CD8-positive, alpha-beta T cell (primary cell): ENCODE measurements at regions of chr12 and their contacts with region 1.

Region 1: GRCh38 chr12:12716793-12717585 is at the start of gene CDKN1B:
- DNase-seq: peak; percentile 76 to 93 (median 86)
- ATAC-seq: peak; percentile 62
- H3K4me3 ChIP-seq: peak within 1 kb of the TSS; percentile 95 to 96
- H3K4me3 Mint-ChIP-seq: peak within 1 kb of the TSS; percentile 98
- H3K27ac ChIP-seq: peak within 1 kb of the TSS; percentile 93 to 97
- H3K27ac Mint-ChIP-seq: peak within 1 kb of the TSS; percentile 98
- H3K4me1 ChIP-seq: peaks cover 47% of the 10 kb centered on the region
- H3K4me1 Mint-ChIP-seq: peaks cover 66% of the 10 kb centered on the region
- H3K27me3 ChIP-seq: no peaks in the 10 kb centered on the region
- H3K27me3 Mint-ChIP-seq: no peaks in the 10 kb centered on the region
- CTCF ChIP-seq: no peak
- total RNA-seq, gene CDKN1B: 240 to 245 TPM

Region 2: GRCh38 chr12:10721651-10722501 is 1995.1 kb before region 1 on chr12:
- CTCF ChIA-PET with region 1: no interaction called
- POLR2A ChIA-PET with region 1: no interaction called
- intact Hi-C with region 1: loop called in 1 of 2 experiments (anchors 10 kb)
- DNase-seq: peak; percentile 26 to 96 (median 63)
- ATAC-seq: peak; percentile 75
- H3K4me3 ChIP-seq: peak overlapping the region; percentile 69 to 72
- H3K4me3 Mint-ChIP-seq: peak overlapping the region; percentile 91
- H3K27ac ChIP-seq: peak overlapping the region; percentile 86 to 94
- H3K27ac Mint-ChIP-seq: peak overlapping the region; percentile 93
- H3K4me1 ChIP-seq: peaks cover 25% of the 10 kb centered on the region
- H3K4me1 Mint-ChIP-seq: peaks cover 50% of the 10 kb centered on the region
- H3K27me3 ChIP-seq: peaks cover 0 to 6% of the 10 kb centered on the region in 2 experiments
- H3K27me3 Mint-ChIP-seq: peaks cover 15% of the 10 kb centered on the region
- CTCF ChIP-seq: no peak

Region 3: DNA sequence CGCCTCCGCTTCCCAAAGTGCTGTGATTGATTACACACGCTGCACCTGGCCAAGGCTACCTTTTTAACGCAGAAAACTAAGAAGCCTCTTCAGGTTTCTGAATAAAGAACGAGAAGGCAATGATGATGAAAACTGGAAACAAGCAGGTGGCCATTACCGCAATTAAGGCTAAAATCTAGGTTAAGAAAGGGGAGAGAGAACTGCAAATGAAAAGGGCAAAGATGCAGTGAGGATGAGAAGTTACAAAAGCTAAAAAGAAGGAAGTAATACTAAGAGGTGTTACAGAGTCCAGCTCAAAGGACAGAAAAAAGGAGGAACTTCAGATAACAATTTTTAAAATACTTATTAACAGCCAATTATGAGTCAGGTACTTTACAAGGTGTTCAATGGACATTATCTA is 234.0 kb before region 1 on chr12:
- CTCF ChIA-PET with region 1: no interaction called
- POLR2A ChIA-PET with region 1: no interaction called
- intact Hi-C with region 1: loop called (anchors 5 kb)
- DNase-seq: no peak
- ATAC-seq: no peak
- H3K4me3 ChIP-seq: peak overlapping the region in 1 of 2 experiments; percentile 11
- H3K4me3 Mint-ChIP-seq: peak overlapping the region; percentile 47
- H3K27ac ChIP-seq: peak overlapping the region; percentile 73 to 83
- H3K27ac Mint-ChIP-seq: peak overlapping the region; percentile 99
- H3K4me1 ChIP-seq: peaks cover 28% of the 10 kb centered on the region
- H3K4me1 Mint-ChIP-seq: peaks cover 52% of the 10 kb centered on the region
- H3K27me3 ChIP-seq: no peaks in the 10 kb centered on the region
- H3K27me3 Mint-ChIP-seq: no peaks in the 10 kb centered on the region
- CTCF ChIP-seq: no peak

Region 4: GRCh38 chr12:12661086-12661485 is 55.9 kb before region 1 on chr12:
- CTCF ChIA-PET with region 1: interaction called, 3 read pairs
- POLR2A ChIA-PET with region 1: interaction called, 5 read pairs
- intact Hi-C with region 1: loop called in 1 of 2 experiments (anchors 2 kb)
- DNase-seq: no peak
- ATAC-seq: no peak
- H3K4me3 ChIP-seq: no peak overlapping the region
- H3K4me3 Mint-ChIP-seq: no peak overlapping the region
- H3K27ac ChIP-seq: no peak overlapping the region
- H3K27ac Mint-ChIP-seq: no peak overlapping the region
- H3K4me1 ChIP-seq: no peaks in the 10 kb centered on the region
- H3K4me1 Mint-ChIP-seq: peaks cover under 1% of the 10 kb centered on the region
- H3K27me3 ChIP-seq: no peaks in the 10 kb centered on the region
- H3K27me3 Mint-ChIP-seq: no peaks in the 10 kb centered on the region
- CTCF ChIP-seq: no peak

Region 5: DNA sequence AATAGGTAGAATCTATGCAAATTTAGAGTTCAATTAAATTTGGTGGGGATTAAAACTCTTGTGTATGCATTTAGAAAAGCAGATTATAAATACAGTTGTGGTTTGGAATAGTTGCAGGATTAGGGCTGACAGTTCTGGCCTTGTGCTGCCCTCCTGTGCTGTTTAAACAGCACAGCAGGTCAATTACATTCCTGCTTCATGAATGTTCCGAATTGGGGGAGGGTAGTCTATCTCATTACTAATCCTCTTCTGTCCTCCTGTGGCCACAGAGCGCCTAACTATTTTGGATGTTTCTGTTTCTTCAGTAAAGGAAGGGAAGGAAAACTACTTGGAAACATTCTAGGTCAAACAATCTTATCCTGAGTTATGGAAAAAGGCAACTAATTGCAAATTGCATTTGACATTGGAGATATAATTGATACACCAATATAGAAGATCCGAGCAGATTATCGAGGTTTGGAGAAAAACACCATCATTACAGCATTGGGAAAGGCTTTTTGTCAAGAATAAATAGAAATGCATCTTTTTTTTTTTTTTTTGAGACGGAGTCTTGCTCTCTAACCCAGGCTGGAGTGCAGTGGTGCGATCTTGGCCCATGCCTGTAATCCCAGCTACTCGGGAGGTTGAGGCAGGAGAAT is 12.3 kb before region 1 on chr12:
- CTCF ChIA-PET with region 1: interaction called, 26 read pairs
- POLR2A ChIA-PET with region 1: interaction called, 339 read pairs
- intact Hi-C with region 1: loop called in 1 of 2 experiments (anchors 1 kb)
- DNase-seq: peak in 5 of 9 experiments; percentile 24 to 77 (median 35)
- ATAC-seq: peak; percentile 75
- H3K4me3 ChIP-seq: no peak overlapping the region
- H3K4me3 Mint-ChIP-seq: peak overlapping the region; percentile 50
- H3K27ac ChIP-seq: no peak overlapping the region
- H3K27ac Mint-ChIP-seq: peak overlapping the region; percentile 33
- H3K4me1 ChIP-seq: peaks cover 35% of the 10 kb centered on the region
- H3K4me1 Mint-ChIP-seq: peaks cover 21% of the 10 kb centered on the region
- H3K27me3 ChIP-seq: no peaks in the 10 kb centered on the region
- H3K27me3 Mint-ChIP-seq: no peaks in the 10 kb centered on the region
- CTCF ChIP-seq: peak; percentile 60

Region 6: GRCh38 chr12:12975322-12976077 is 258.5 kb after region 1 on chr12:
- CTCF ChIA-PET with region 1: no interaction called
- POLR2A ChIA-PET with region 1: no interaction called
- intact Hi-C with region 1: no loop called
- DNase-seq: no peak
- ATAC-seq: no peak
- H3K4me3 ChIP-seq: no peak overlapping the region
- H3K4me3 Mint-ChIP-seq: no peak overlapping the region
- H3K27ac ChIP-seq: no peak overlapping the region
- H3K27ac Mint-ChIP-seq: no peak overlapping the region
- H3K4me1 ChIP-seq: no peaks in the 10 kb centered on the region
- H3K4me1 Mint-ChIP-seq: no peaks in the 10 kb centered on the region
- H3K27me3 ChIP-seq: no peaks in the 10 kb centered on the region
- H3K27me3 Mint-ChIP-seq: no peaks in the 10 kb centered on the region
- CTCF ChIP-seq: no peak

Region 7: GRCh38 chr12:13834241-13834640 is 1117.3 kb after region 1 on chr12:
- CTCF ChIA-PET with region 1: no interaction called
- POLR2A ChIA-PET with region 1: no interaction called
- intact Hi-C with region 1: no loop called
- DNase-seq: no peak
- ATAC-seq: no peak
- H3K4me3 ChIP-seq: no peak overlapping the region
- H3K4me3 Mint-ChIP-seq: no peak overlapping the region
- H3K27ac ChIP-seq: no peak overlapping the region
- H3K27ac Mint-ChIP-seq: no peak overlapping the region
- H3K4me1 ChIP-seq: no peaks in the 10 kb centered on the region
- H3K4me1 Mint-ChIP-seq: no peaks in the 10 kb centered on the region
- H3K27me3 ChIP-seq: no peaks in the 10 kb centered on the region
- H3K27me3 Mint-ChIP-seq: peaks cover 10% of the 10 kb centered on the region
- CTCF ChIP-seq: no peak